ENCODE measurements at regions of chr7 and their contacts with region 1.

Region 1: DNA sequence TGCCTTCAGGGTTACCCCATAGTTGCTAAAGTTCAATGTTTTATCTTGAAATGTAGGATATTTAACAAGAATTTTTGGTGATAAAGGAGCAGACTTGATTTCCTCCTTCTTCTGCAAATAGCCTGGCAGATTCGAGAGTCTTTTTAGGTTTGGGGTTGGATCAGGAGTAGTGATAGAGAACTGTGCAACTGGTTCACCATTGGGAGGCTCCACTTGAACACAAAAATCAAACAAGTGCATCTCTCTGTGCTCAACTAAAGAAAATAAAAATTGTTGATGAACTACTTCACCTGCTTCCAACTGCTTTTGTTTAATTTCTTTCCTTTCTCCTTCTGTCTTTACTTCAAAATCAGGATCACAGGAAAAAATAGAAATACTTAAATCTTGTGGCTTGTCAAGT is 58.5 kb downstream of the MACC1 start:
- DNase-seq: peak in 15 of 42 donors; percentile 5 to 69 (median 25)

Region 2: DNA sequence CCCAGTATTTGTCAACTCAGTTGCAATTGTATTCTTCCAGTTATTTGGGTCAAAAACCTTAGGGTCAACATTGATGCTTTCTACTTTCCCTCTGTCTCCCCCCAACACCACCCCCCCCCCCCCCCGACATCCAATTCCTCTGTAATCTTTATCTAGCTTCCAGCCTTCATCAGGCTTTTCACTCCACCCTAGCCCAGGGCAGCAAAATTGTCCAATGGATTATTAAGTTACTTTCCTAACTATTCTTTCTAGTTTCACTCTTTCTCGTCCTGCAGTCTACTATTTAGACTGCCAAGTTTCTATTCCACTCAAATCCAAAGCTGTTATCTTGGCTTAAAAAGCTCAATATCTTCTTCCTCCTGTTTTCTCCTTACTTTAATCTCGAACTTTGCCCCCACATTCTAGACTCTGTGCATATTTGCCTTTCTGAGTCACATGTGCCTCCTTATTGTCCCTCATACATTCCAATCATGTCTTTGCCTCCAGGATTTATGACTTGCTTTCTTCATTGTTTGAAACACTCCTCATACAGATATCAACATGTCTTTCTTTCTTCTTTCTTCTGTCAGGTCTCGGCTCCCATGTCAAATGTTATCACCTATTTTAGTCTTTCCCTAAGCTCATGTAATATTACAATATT is 188.7 kb before region 1 on chr7:
- intact Hi-C with region 1: no loop called
- DNase-seq: no peak

Region 3: DNA sequence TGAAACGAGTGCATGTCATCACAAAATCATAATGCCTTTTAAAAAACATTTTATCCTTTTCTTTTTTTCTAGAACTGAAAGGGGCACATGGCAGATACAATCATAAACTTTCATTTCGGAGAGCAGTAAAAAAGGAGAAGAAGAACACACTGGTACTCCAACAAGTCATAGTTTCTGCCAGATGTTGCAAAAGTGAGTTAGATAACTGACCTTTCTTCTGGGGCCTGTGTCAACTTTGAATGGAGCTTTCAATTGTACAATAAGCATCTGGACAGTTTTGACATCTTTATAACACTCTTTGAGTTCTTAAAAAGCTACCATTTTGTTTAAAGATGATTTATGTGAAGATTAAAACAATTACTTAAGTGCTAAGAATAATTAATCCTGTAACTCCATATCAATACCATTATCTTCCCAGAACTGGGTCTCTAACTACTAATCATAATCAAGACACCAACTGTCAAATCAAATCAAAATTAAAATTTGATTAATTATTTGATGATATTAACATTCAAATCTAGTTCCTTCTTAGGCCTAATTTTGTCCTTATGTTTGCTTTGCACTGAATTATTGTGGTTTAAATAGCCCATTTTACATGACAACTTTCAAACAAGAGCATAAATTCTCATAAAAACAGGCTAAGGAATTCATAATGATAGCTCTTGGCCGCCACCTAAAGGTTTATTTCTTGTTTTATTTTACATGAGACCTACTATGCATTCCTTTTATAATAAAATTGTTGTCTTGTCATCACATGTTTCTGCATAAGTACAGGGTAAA is 152.5 kb after region 1 on chr7:
- intact Hi-C with region 1: loop called (anchors 2 kb)
- DNase-seq: peak in 1 of 42 donors; percentile 20

Region 4: DNA sequence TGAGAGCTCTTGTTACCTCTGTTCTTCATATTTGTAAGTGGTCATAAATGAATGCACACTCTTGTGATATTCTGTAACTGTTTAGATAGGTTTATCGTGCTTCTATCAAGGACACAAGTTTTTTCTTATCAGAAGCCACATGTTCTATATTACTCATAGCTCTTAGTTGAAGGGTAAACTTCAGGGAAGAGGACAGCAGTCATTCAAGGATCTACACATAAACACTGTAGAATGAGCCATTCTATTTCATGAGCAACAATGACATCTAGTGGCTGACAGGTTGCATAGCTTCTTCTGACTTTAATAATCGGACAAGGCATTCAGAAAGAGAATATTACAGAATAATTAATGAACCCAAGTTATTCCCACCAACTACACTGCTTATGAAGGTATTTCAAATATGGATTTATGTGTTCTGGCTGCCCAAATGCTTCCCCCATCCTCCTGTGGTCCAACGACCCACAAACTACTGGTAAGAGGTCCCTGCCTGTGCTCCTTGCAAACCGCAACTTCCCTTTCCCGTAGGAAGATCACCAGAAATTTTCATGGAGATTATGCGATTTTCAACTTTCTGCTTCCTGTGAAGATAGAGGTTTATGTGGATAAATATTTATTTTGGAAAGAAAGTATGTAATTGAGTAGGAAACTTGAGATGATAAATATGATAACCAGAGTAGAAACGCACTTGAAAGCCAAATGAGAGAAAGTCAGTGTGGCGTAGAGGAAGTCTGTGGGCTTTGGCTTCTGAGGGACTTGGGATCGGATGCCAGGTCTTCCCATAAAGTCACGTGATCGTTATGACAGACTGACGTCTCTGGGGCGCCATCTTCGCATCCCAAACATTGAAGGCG is 440.0 kb after region 1 on chr7:
- intact Hi-C with region 1: loop called (anchors 2 kb)
- DNase-seq: peak in 12 of 42 donors; percentile 5 to 65 (median 24)